IMR-90 (cell line): ENCODE measurements at regions of chrX and their contacts with region 1.

Region 1: DNA sequence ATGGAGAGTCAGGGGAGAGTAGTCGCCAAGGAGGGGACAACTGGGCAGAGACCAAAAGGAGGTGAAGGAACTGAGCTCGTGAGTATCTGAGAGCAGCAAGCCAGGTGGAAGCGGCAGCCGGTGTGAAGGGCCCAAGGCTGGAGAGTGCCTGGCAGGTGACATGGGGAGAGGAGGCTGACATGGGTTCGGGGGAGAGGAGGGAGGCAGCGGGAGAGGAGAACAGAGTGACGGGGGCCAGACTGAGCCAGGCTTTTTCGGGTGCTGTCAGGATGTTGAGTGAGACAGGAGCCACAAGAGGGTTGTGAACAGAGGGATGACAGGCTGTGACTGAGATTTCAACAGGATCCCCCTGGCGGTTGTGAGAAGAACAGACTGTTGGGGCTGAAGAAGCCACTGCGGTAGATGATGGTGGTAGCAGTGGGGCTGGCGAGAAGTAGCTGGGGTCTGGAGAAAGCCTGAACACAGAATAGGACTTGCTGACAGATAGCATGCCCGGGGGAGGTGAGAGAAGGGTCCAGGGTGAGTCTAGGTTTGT is 5.7 kb downstream of the ELK1 start:
- DNase-seq: peak; percentile 44
- ATAC-seq: peak; percentile 33; the same call in 1 of the 2 replicates
- H3K4me3 ChIP-seq: no peak overlapping the region
- H3K27ac ChIP-seq: no peak overlapping the region
- H3K4me1 ChIP-seq: peaks cover 5% of the 10 kb centered on the region
- H3K27me3 ChIP-seq: no peaks in the 10 kb centered on the region
- CTCF ChIP-seq: peak; percentile 53
- POLR2A ChIP-seq: no peak
- RAD21 ChIP-seq: peak; percentile 40; the same call in 1 of the 2 replicates

Region 2: DNA sequence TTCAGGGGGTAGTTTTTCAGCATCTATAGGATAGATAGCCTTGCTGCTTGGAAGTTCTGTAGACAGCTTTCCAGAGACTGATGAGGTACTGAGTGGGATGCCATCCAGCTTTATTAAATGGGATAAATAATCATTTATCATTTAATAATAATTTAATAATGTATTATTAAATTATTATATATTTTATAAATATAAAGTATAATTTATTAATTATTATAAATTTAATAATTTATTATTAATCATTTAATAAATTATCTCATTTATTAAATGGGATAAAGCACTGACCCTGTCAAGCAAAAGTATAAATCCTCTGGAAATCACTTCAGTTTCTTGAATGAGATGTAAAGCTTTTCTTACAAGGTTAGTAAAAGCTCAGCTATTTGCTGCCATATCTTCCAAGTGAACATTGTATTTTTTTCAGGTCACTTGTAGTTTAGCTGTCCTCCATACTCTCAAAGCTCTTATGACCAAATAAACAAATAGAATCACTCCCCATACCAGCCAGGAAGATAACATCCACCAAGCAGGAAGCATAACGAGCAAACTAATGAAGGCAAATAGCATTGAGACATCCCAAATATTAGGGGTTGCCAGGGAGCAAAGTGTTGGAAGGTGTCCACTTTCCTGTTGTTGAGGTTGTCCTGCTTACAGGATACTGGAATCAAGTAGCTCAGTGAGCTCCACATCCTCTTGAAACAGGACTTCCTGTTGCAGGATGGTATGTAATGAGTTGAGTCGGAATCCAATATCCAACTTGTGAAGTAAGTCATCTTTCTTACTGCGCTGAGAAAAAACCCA is 1188.3 kb before region 1 on chrX:
- CTCF ChIA-PET with region 1: no interaction called
- POLR2A ChIA-PET with region 1: no interaction called
- dilution Hi-C with region 1: no loop called
- in situ Hi-C with region 1: no loop called
- intact Hi-C with region 1: no loop called
- DNase-seq: no peak
- ATAC-seq: no peak
- H3K4me3 ChIP-seq: no peak overlapping the region
- H3K27ac ChIP-seq: no peak overlapping the region
- H3K4me1 ChIP-seq: no peaks in the 10 kb centered on the region
- H3K27me3 ChIP-seq: no peaks in the 10 kb centered on the region
- CTCF ChIP-seq: no peak
- POLR2A ChIP-seq: no peak
- RAD21 ChIP-seq: no peak

Region 3: GRCh38 chrX:46782034-46782433 is 862.6 kb before region 1 on chrX:
- CTCF ChIA-PET with region 1: no interaction called
- POLR2A ChIA-PET with region 1: no interaction called
- dilution Hi-C with region 1: no loop called
- in situ Hi-C with region 1: no loop called
- intact Hi-C with region 1: no loop called
- DNase-seq: no peak
- ATAC-seq: no peak
- H3K4me3 ChIP-seq: no peak overlapping the region
- H3K27ac ChIP-seq: no peak overlapping the region
- H3K4me1 ChIP-seq: no peaks in the 10 kb centered on the region; the same call in 1 of the 2 replicates
- H3K27me3 ChIP-seq: peaks cover 3% of the 10 kb centered on the region
- CTCF ChIP-seq: no peak
- POLR2A ChIP-seq: no peak
- RAD21 ChIP-seq: no peak

Region 4: GRCh38 chrX:47217642-47218279 is 426.9 kb before region 1 on chrX:
- CTCF ChIA-PET with region 1: no interaction called
- POLR2A ChIA-PET with region 1: no interaction called
- dilution Hi-C with region 1: no loop called
- in situ Hi-C with region 1: loop called (anchors 25 kb)
- intact Hi-C with region 1: no loop called
- DNase-seq: peak; percentile 98
- ATAC-seq: peak; percentile 86
- H3K4me3 ChIP-seq: peak overlapping the region; percentile 54
- H3K27ac ChIP-seq: peak overlapping the region; percentile 94
- H3K4me1 ChIP-seq: peaks cover 10% of the 10 kb centered on the region; the same call in 1 of the 2 replicates
- H3K27me3 ChIP-seq: no peaks in the 10 kb centered on the region
- CTCF ChIP-seq: no peak
- POLR2A ChIP-seq: no peak; the same call in 1 of the 2 replicates
- RAD21 ChIP-seq: no peak

Region 5: DNA sequence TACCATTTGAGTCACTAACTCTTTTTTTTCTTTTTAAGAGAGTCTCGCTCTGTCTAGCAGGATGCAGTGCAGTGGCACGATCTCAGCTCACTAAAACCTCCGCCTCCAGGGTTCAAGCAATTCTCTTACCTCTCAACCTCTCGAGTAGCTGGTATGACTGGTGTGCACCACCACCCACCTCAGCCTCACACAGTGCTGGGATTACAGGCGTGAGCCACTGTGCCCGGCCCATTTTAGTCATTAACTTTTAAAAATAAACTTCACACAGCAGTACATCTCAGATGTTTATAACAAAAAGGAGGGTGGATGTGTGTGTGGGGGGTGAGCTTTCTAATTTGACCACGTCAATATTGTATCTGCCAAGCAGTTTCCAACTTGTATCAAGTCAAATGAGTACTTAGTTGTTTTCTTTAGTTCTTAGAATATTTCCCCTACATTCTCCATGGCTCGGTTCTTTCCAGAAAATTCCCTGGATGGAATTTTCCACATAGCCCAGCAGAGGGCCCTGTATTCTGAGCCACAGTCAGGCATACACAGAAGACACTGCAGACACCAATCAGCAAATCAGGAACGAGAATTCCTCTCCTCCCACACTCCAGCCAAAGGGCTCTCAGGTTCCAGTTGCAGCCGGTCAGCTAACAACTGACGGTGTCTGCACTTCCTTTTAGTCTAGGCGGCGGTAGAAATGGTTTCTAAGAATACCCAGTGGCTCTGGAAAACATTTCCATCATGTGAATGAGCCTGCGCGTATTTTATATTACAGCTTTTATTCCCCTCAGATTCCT is 103.7 kb before region 1 on chrX:
- CTCF ChIA-PET with region 1: interaction called, 6 read pairs
- POLR2A ChIA-PET with region 1: no interaction called
- dilution Hi-C with region 1: no loop called
- in situ Hi-C with region 1: no loop called
- intact Hi-C with region 1: loop called (anchors 1 kb)
- DNase-seq: peak; percentile 92
- ATAC-seq: peak; percentile 99
- H3K4me3 ChIP-seq: no peak overlapping the region
- H3K27ac ChIP-seq: peak overlapping the region; percentile 15; the same call in 1 of the 2 replicates
- H3K4me1 ChIP-seq: no peaks in the 10 kb centered on the region
- H3K27me3 ChIP-seq: no peaks in the 10 kb centered on the region
- CTCF ChIP-seq: peak; percentile 64
- POLR2A ChIP-seq: no peak; the same call in 1 of the 2 replicates
- RAD21 ChIP-seq: peak; percentile 61

Region 6: GRCh38 chrX:47587091-47587891 is 57.3 kb before region 1 on chrX:
- CTCF ChIA-PET with region 1: interaction called, 4 read pairs
- POLR2A ChIA-PET with region 1: no interaction called
- dilution Hi-C with region 1: no loop called
- in situ Hi-C with region 1: no loop called
- intact Hi-C with region 1: loop called (anchors 5 kb)
- DNase-seq: peak; percentile 27
- ATAC-seq: no peak
- H3K4me3 ChIP-seq: no peak overlapping the region
- H3K27ac ChIP-seq: no peak overlapping the region
- H3K4me1 ChIP-seq: peaks cover 5% of the 10 kb centered on the region; the same call in 1 of the 2 replicates
- H3K27me3 ChIP-seq: no peaks in the 10 kb centered on the region
- CTCF ChIP-seq: no peak
- POLR2A ChIP-seq: peak; percentile 89
- RAD21 ChIP-seq: no peak

Region 7: GRCh38 chrX:47743504-47743903 is 98.9 kb after region 1 on chrX:
- CTCF ChIA-PET with region 1: no interaction called
- POLR2A ChIA-PET with region 1: no interaction called
- dilution Hi-C with region 1: no loop called
- in situ Hi-C with region 1: no loop called
- intact Hi-C with region 1: no loop called
- DNase-seq: peak; percentile 21
- ATAC-seq: no peak
- H3K4me3 ChIP-seq: no peak overlapping the region
- H3K27ac ChIP-seq: no peak overlapping the region
- H3K4me1 ChIP-seq: no peaks in the 10 kb centered on the region
- H3K27me3 ChIP-seq: peaks cover 9% of the 10 kb centered on the region
- CTCF ChIP-seq: no peak
- POLR2A ChIP-seq: no peak
- RAD21 ChIP-seq: no peak

Region 8: DNA sequence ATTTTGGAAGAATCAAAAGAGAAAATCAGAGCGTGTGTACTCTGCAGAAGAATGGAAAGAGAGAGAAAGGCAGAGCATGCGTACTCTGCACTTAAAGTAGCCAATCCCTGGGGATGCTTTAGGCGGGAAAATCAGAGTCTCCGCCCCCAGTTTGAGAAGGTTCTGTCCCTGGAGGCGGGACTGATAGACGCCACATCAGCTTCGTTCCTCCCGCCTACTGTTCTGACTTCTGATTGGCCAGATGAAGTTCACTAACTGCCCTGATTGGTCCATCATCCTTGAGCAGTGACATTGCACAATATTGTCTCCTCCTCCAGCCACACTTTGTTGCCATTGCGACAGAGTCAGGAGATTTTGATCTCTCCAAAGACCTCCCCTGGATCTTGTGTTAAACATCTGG is 634.3 kb after region 1 on chrX:
- CTCF ChIA-PET with region 1: no interaction called
- POLR2A ChIA-PET with region 1: no interaction called
- dilution Hi-C with region 1: no loop called
- in situ Hi-C with region 1: no loop called
- intact Hi-C with region 1: no loop called
- DNase-seq: no peak
- ATAC-seq: no peak
- H3K4me3 ChIP-seq: no peak overlapping the region
- H3K27ac ChIP-seq: no peak overlapping the region
- H3K4me1 ChIP-seq: no peaks in the 10 kb centered on the region
- H3K27me3 ChIP-seq: no peaks in the 10 kb centered on the region
- CTCF ChIP-seq: no peak
- POLR2A ChIP-seq: no peak
- RAD21 ChIP-seq: no peak